HepG2 (cell line): ENCODE measurements at regions of chr4 and their contacts with region 1.

Region 1: DNA sequence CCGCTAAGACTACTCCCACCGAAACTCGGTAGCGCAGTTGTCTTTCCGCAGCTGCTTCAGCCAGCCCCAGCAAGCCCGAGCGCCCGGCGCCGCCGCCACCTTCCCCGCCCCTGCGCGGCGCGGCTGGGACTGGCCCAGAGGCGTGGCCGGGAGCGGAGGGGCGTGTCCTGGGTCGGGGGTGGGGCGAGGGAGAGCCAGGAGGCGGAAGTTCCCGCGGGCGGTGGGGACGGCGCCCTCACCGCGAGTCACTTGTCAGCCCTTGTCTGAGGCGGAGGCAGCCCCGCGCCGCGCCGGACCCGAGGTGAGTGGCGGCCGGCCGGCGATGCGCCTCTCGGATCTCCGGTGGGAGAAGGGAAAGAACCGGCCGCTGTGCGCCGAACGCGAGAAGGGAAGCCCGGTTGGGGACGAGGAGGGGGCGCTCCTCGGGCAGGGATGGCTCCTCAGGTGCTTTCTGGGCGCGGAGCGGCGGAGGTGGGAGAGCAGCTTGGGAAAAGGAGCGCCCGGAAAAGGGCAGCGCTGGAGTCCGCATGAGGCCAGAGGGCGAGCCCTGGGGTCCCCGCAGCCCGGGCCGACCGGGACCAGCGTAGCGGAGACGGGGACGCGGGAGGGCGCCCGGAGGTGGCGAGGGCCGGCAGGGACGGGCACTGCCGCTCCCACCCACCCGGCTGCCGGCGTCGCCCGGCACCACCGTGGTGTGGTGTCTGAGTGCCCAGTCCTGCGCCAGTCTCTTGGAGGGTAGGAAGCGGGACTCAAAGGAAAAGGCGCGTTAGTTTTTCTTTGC is at the start of gene PDLIM5:
- DNase-seq: peak; percentile 80
- ATAC-seq: peak; percentile 89
- H3K4me3 ChIP-seq: peak within 1 kb of the TSS; percentile 90 to 96 (median 93)
- H3K27ac ChIP-seq: peak within 1 kb of the TSS; percentile 91
- H3K4me1 ChIP-seq: peaks cover 63% of the 10 kb centered on the region
- H3K27me3 ChIP-seq: no peaks in the 10 kb centered on the region; a peak in 1 of 5 replicates
- CTCF ChIP-seq: peak; percentile 38; the same call in 1 of the 2 replicates
- EP300 ChIP-seq: no peak
- POLR2A ChIP-seq: peak; percentile 79 to 94
- RAD21 ChIP-seq: no peak; the same call in none of the 2 replicates
- total RNA-seq, gene PDLIM5: 52.8 and 70.2 TPM in 2 replicates

Region 2: GRCh38 chr4:94290245-94290644 is 161.6 kb before region 1 on chr4:
- CTCF ChIA-PET with region 1: no interaction called
- POLR2A ChIA-PET with region 1: no interaction called
- in situ Hi-C with region 1: no loop called
- intact Hi-C with region 1: no loop called
- DNase-seq: no peak
- ATAC-seq: peak; percentile 30; the same call in 1 of the 3 replicates
- H3K4me3 ChIP-seq: no peak overlapping the region
- H3K27ac ChIP-seq: no peak overlapping the region
- H3K4me1 ChIP-seq: no peaks in the 10 kb centered on the region
- H3K27me3 ChIP-seq: no peaks in the 10 kb centered on the region
- CTCF ChIP-seq: no peak
- EP300 ChIP-seq: no peak
- POLR2A ChIP-seq: no peak
- RAD21 ChIP-seq: no peak

Region 3: GRCh38 chr4:94419956-94420355 is 31.9 kb before region 1 on chr4:
- CTCF ChIA-PET with region 1: no interaction called
- POLR2A ChIA-PET with region 1: interaction called, 94 read pairs
- in situ Hi-C with region 1: no loop called
- intact Hi-C with region 1: no loop called
- DNase-seq: peak; percentile 76
- ATAC-seq: peak; percentile 98
- H3K4me3 ChIP-seq: no peak overlapping the region; a peak in 1 of 6 replicates
- H3K27ac ChIP-seq: peak overlapping the region; percentile 29
- H3K4me1 ChIP-seq: peaks cover 44% of the 10 kb centered on the region
- H3K27me3 ChIP-seq: no peaks in the 10 kb centered on the region
- CTCF ChIP-seq: no peak
- EP300 ChIP-seq: peak in 1 of 2 experiments; percentile 88; a peak in 2 of 4 replicates
- POLR2A ChIP-seq: no peak
- RAD21 ChIP-seq: no peak

Region 4: GRCh38 chr4:94472056-94472824 is 20.4 kb after region 1 on chr4:
- CTCF ChIA-PET with region 1: no interaction called
- POLR2A ChIA-PET with region 1: interaction called, 14 read pairs
- in situ Hi-C with region 1: no loop called
- intact Hi-C with region 1: loop called (anchors 1 kb)
- DNase-seq: peak; percentile 41
- ATAC-seq: peak; percentile 51
- H3K4me3 ChIP-seq: no peak overlapping the region; a peak in 1 of 6 replicates
- H3K27ac ChIP-seq: peak overlapping the region; percentile 71
- H3K4me1 ChIP-seq: peaks cover 82% of the 10 kb centered on the region
- H3K27me3 ChIP-seq: no peaks in the 10 kb centered on the region
- CTCF ChIP-seq: no peak
- EP300 ChIP-seq: no peak
- POLR2A ChIP-seq: no peak
- RAD21 ChIP-seq: no peak

Region 5: DNA sequence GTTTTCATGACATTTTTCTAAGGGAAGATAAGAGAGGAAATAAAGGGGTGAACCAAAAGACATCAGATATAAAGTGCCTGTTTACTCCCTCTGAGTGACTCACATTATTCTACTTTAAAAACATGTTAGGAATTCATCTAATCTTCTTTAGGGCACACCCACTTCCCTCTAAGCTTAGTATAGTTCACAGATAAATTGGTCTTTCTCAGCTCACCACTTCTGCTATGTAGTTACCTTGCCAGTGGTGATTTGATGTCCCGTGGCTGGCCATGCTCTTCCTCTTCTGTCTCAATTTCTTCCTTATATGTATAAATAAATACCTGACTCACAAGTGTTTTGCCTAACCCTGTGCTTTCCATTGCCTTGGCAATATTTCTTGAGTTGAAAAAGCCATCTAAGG is 96.7 kb after region 1 on chr4:
- CTCF ChIA-PET with region 1: no interaction called
- POLR2A ChIA-PET with region 1: interaction called, 4 read pairs
- in situ Hi-C with region 1: loop called (anchors 10 kb)
- intact Hi-C with region 1: no loop called
- DNase-seq: peak; percentile 71
- ATAC-seq: peak; percentile 72
- H3K4me3 ChIP-seq: no peak overlapping the region
- H3K27ac ChIP-seq: no peak overlapping the region
- H3K4me1 ChIP-seq: peaks cover 50% of the 10 kb centered on the region
- H3K27me3 ChIP-seq: no peaks in the 10 kb centered on the region
- CTCF ChIP-seq: no peak
- EP300 ChIP-seq: no peak
- POLR2A ChIP-seq: no peak
- RAD21 ChIP-seq: no peak

Region 6: DNA sequence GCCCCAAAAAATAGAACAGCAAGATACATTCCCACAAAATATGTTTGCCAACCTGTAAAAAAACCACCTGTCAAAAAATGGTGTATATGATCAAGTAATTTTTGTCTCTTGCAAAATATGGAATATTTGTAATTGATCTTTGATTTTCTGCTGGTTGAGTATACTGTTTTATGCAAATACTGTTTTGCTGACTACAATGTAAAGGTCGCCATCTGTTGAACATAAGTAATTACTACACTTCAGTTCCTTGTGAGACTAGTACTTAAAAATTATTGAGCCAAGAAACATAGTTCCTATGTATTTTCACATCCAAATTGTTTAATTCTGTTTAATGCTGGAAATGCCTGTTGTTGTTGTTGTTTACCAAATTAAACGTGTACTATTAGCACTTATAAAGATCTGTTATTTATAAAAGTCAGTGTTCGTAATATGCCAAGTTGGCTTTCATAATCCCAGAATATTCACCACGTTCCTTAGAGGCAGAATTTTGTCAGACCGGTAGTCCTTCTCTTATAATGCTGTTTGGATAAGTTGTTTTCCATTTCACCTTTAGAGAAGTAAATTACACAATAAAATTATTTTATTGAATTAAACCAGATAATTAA is 144.1 kb after region 1 on chr4:
- CTCF ChIA-PET with region 1: no interaction called
- POLR2A ChIA-PET with region 1: no interaction called
- in situ Hi-C with region 1: no loop called
- intact Hi-C with region 1: loop called (anchors 1 kb)
- DNase-seq: peak; percentile 48
- ATAC-seq: 0 out of 3 replicates have a peak, but pooled peaks have one; percentile 51
- H3K4me3 ChIP-seq: no peak overlapping the region
- H3K27ac ChIP-seq: no peak overlapping the region
- H3K4me1 ChIP-seq: no peaks in the 10 kb centered on the region
- H3K27me3 ChIP-seq: no peaks in the 10 kb centered on the region
- CTCF ChIP-seq: peak; percentile 65
- EP300 ChIP-seq: no peak
- POLR2A ChIP-seq: no peak
- RAD21 ChIP-seq: peak; percentile 70